Mammary epithelial cell (primary cell): ENCODE measurements at regions of chr18 and their contacts with region 1.

Region 1: GRCh38 chr18:48445540-48445939 is 36.4 kb upstream of the ZBTB7C start:
- DNase-seq: peak; percentile 75
- H3K4me3 ChIP-seq: no peak overlapping the region
- H3K27ac ChIP-seq: no peak overlapping the region
- H3K4me1 ChIP-seq: peaks cover 16% of the 10 kb centered on the region
- H3K27me3 ChIP-seq: no peaks in the 10 kb centered on the region
- CTCF ChIP-seq: peak; percentile 98

Region 2: DNA sequence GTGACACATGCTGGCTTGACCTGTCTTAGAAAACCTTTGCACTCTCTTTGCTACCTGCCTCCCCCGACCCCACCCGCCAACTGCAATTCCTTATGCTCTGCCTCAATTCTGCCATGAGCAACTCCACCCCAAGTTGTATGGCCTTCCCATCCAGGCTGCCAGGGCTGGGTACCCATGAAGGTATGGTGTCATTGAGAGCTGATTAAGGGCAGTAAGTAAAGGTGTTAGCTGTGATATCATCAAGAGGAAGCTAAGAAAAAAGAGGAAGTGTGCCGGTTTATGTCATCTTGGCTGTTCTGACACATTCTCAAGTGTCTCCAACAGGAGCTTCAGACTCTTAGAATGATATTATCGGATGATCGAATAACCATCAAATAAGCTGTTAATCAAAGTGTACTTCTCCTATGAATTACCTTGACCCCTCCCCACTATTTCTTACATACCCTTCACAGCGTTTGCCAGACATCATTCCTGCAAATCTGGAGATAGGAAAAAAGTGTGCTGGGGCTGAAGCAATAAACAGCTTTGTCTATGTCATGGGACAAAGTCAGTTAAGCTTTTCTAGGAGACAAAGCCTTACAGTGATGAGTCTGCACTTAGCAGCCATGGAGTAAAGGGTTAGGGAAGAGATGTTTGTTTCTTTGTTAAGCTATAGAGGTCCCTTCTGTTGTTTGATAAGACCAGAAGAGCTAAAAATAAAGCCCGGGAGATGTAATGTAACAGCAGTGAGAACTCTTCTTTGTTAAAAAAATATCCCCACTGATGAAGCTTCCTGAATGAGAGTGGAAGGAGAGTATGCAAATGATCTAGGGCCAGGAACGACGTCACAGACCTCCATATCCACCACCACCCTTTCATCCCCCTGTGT is 474.6 kb before region 1 on chr18:
- CTCF ChIA-PET with region 1: no interaction called
- dilution Hi-C with region 1: no loop called
- in situ Hi-C with region 1: no loop called
- intact Hi-C with region 1: no loop called
- DNase-seq: no peak
- H3K4me3 ChIP-seq: no peak overlapping the region
- H3K27ac ChIP-seq: no peak overlapping the region
- H3K4me1 ChIP-seq: no peaks in the 10 kb centered on the region
- H3K27me3 ChIP-seq: peaks cover 2% of the 10 kb centered on the region
- CTCF ChIP-seq: no peak

Region 3: GRCh38 chr18:48022531-48023329 is 422.8 kb before region 1 on chr18:
- CTCF ChIA-PET with region 1: no interaction called
- dilution Hi-C with region 1: no loop called
- in situ Hi-C with region 1: no loop called
- intact Hi-C with region 1: loop called (anchors 1 kb)
- DNase-seq: peak; percentile 67
- H3K4me3 ChIP-seq: no peak overlapping the region
- H3K27ac ChIP-seq: peak overlapping the region; percentile 33
- H3K4me1 ChIP-seq: peaks cover 29% of the 10 kb centered on the region
- H3K27me3 ChIP-seq: no peaks in the 10 kb centered on the region
- CTCF ChIP-seq: peak; percentile 58 to 70

Region 4: DNA sequence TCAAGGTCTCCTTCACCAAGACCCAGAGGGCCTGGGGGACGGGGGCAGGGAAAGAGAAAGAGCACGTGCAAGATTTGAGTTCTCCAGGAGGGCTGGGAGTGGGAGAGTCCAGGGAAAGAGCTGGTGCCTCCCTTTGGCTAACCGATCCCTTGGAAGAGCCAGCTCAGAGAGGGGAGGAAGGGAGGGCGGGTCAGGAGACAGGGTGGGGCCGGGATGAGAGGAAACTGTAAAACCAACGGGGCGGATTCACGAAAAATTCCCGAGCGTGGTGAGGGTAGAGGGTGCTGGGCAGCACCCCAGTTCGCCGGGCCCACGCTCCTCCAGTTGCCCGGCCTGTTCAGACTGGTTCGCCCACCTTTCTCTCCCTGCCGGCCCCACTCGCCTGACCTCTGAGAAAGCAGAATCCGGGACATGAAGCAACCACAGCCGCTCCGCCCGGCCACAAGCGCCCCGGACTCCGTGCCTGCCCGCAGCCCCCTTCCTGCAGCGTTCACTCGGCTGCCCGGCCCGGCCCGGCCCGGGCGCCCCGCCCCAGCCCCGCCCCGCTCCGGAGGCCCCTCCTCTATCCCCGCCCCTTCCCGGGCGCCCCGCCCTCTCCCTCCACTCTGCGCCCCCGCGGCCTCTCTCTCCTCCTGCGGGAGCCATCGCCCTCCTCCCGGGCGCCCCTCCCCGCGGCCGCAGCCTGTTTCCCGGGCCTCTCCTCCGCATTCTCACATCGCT is 284.2 kb before region 1 on chr18:
- CTCF ChIA-PET with region 1: interaction called, 11 read pairs
- dilution Hi-C with region 1: no loop called
- in situ Hi-C with region 1: no loop called
- intact Hi-C with region 1: no loop called
- DNase-seq: peak; percentile 91
- H3K4me3 ChIP-seq: peak overlapping the region; percentile 53 to 60 (median 60)
- H3K27ac ChIP-seq: peak overlapping the region; percentile 76
- H3K4me1 ChIP-seq: peaks cover 27% of the 10 kb centered on the region
- H3K27me3 ChIP-seq: no peaks in the 10 kb centered on the region
- CTCF ChIP-seq: no peak

Region 5: DNA sequence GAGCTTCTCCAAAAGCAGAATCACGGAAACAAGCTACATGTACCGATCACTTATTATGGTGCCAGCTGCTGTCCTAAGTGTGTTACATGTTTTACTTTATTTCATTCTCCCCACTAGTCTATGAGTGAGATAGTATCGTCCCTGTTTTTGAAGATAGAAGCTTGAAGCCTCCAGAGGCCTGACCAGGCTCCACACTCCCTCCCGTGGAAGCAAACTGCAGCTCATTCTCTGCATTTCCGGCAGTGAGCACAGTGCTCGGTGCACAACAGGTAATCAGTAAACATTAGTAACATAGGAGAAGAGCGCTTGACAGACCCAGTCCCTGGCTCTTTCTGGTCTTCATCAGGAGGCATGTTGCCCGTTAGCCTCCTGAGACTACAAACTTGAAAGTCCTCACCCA is 109.2 kb before region 1 on chr18:
- CTCF ChIA-PET with region 1: no interaction called
- dilution Hi-C with region 1: no loop called
- in situ Hi-C with region 1: loop called in 1 of 2 experiments (anchors 10 kb)
- intact Hi-C with region 1: loop called (anchors 1 kb)
- DNase-seq: no peak
- H3K4me3 ChIP-seq: no peak overlapping the region
- H3K27ac ChIP-seq: no peak overlapping the region
- H3K4me1 ChIP-seq: peaks cover 7% of the 10 kb centered on the region
- H3K27me3 ChIP-seq: no peaks in the 10 kb centered on the region
- CTCF ChIP-seq: peak; percentile 53 to 83

Region 6: GRCh38 chr18:48391868-48392267 is 53.7 kb before region 1 on chr18:
- CTCF ChIA-PET with region 1: interaction called, 16 read pairs
- dilution Hi-C with region 1: loop called (anchors 5 kb)
- in situ Hi-C with region 1: no loop called
- intact Hi-C with region 1: no loop called
- DNase-seq: no peak
- H3K4me3 ChIP-seq: no peak overlapping the region
- H3K27ac ChIP-seq: no peak overlapping the region
- H3K4me1 ChIP-seq: peaks cover 41% of the 10 kb centered on the region
- H3K27me3 ChIP-seq: no peaks in the 10 kb centered on the region
- CTCF ChIP-seq: no peak

Region 7: DNA sequence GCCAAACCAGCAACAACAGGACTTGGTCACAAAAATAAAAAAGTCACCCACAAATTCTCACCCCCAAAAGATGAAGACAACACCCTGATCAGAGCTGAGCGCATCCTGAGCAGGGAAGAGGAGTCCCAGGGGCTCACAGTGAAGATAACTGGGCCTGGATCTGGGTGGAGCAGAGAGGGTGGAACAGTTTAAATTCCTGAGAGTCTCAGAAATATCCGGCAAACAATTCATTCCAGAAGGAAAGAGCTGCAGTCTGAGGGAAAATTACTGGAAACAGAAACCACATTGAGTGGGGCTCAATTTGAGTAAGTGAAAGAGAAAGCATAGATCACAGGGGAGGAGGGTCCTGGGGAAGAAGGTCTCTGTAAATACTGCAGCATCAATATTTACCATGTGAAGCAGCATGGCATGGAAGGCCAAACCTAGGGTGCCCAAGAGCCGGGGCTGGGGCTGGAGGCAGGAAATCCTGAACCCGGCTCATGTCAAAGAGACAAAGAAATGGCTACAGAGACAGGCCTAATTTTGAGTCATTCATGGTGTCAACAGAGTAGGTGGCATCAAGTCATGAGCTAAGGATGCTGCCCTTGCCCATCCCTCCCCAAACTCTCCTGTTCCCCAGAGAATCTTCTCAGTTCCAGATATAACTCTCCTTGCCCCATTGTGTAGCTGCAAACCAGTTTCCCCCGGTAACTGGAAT is 25.1 kb after region 1 on chr18:
- CTCF ChIA-PET with region 1: no interaction called
- dilution Hi-C with region 1: no loop called
- in situ Hi-C with region 1: no loop called
- intact Hi-C with region 1: loop called (anchors 1 kb)
- DNase-seq: no peak
- H3K4me3 ChIP-seq: no peak overlapping the region
- H3K27ac ChIP-seq: no peak overlapping the region
- H3K4me1 ChIP-seq: no peaks in the 10 kb centered on the region
- H3K27me3 ChIP-seq: no peaks in the 10 kb centered on the region
- CTCF ChIP-seq: no peak

Region 8: GRCh38 chr18:48481092-48481491 is 35.6 kb after region 1 on chr18:
- CTCF ChIA-PET with region 1: no interaction called
- dilution Hi-C with region 1: no loop called
- in situ Hi-C with region 1: no loop called
- intact Hi-C with region 1: no loop called
- DNase-seq: no peak
- H3K4me3 ChIP-seq: no peak overlapping the region
- H3K27ac ChIP-seq: no peak overlapping the region
- H3K4me1 ChIP-seq: no peaks in the 10 kb centered on the region
- H3K27me3 ChIP-seq: no peaks in the 10 kb centered on the region
- CTCF ChIP-seq: no peak

Region 9: DNA sequence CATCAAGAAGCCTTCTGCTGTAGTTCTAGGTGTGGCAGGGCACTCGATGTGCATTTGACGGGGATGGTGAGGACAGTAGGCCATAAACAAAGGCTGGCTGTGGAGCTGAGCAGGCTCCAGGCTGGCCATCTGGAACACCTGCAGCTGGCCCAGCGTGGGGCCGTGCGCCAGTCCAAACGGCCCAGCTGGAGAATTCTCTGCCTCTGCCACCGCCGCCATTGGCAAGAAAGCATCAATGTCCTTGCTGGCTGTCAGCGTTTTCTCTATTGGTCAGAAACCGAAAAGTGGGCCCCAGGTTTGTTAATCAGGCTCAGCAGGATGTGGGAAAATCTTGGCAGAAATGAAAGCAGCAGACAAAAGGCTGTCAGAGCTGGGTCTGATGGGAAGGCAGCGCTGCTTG is 69.2 kb after region 1 on chr18:
- CTCF ChIA-PET with region 1: no interaction called
- dilution Hi-C with region 1: no loop called
- in situ Hi-C with region 1: no loop called
- intact Hi-C with region 1: no loop called
- DNase-seq: no peak
- H3K4me3 ChIP-seq: no peak overlapping the region
- H3K27ac ChIP-seq: no peak overlapping the region
- H3K4me1 ChIP-seq: no peaks in the 10 kb centered on the region
- H3K27me3 ChIP-seq: no peaks in the 10 kb centered on the region
- CTCF ChIP-seq: no peak